MCF 10A (cell line): ENCODE measurements at regions of chr5 and their contacts with region 1.

Region 1: GRCh38 chr5:179749857-179750508 is 17.4 kb downstream of the MAML1 start:
- DNase-seq: no peak
- H3K4me3 Mint-ChIP-seq: no peak overlapping the region
- H3K27ac Mint-ChIP-seq: no peak overlapping the region
- H3K4me1 Mint-ChIP-seq: peaks cover 21% of the 10 kb centered on the region
- H3K27me3 Mint-ChIP-seq: no peaks in the 10 kb centered on the region
- CTCF ChIP-seq: no peak

Region 2: DNA sequence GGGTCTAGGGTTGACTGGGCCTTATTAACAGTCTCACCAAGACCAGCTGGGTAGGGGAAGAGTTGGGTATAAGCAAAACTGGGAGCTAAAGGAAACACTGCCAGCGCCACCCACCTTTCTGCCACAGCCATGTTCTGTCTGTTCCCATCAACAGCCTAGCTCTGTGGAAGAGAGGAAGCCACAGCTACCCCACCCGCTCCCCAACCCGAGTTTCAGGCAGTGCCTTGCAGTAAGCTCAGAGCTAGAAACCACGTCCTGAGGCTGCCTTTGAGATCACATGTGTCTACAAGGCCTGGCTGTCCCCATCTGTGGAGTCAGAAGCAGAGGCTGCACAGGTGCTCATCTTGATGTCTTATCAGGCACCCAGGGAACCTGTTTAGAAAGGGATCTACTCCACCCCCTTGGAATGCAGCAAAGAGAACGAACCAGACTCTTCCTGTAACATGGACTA is 141.8 kb before region 1 on chr5:
- CTCF ChIA-PET with region 1: no interaction called
- POLR2A ChIA-PET with region 1: no interaction called
- intact Hi-C with region 1: no loop called
- DNase-seq: no peak
- H3K4me3 Mint-ChIP-seq: no peak overlapping the region
- H3K27ac Mint-ChIP-seq: no peak overlapping the region
- H3K4me1 Mint-ChIP-seq: peaks cover 14% of the 10 kb centered on the region
- H3K27me3 Mint-ChIP-seq: no peaks in the 10 kb centered on the region
- CTCF ChIP-seq: no peak

Region 3: DNA sequence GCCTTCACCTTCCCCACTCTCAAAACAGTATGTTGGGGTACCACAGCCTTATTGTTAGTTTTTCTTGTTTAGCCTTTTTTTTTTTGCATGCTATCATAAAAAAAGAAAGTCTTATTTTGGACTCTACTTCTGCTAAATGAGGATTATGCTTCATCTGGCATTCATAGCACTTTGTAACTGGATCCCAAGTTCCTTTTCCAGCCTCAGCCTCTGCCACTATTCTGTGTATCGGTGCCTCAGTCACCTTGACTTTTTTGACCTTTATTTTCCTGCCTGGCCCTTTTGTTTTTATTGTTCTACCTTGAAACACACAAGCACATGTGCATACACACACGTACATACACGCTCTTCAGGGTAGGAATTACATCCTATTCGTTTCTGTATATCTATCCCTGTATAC is 25.8 kb before region 1 on chr5:
- CTCF ChIA-PET with region 1: no interaction called
- POLR2A ChIA-PET with region 1: no interaction called
- intact Hi-C with region 1: no loop called
- DNase-seq: no peak
- H3K4me3 Mint-ChIP-seq: no peak overlapping the region
- H3K27ac Mint-ChIP-seq: no peak overlapping the region
- H3K4me1 Mint-ChIP-seq: peaks cover 12% of the 10 kb centered on the region
- H3K27me3 Mint-ChIP-seq: no peaks in the 10 kb centered on the region
- CTCF ChIP-seq: no peak

Region 4: GRCh38 chr5:179738742-179739141 is 11.2 kb before region 1 on chr5:
- CTCF ChIA-PET with region 1: interaction called, 16 read pairs
- POLR2A ChIA-PET with region 1: interaction called, 4 read pairs
- intact Hi-C with region 1: no loop called
- DNase-seq: no peak
- H3K4me3 Mint-ChIP-seq: no peak overlapping the region
- H3K27ac Mint-ChIP-seq: peak overlapping the region; percentile 3
- H3K4me1 Mint-ChIP-seq: peaks cover 39% of the 10 kb centered on the region
- H3K27me3 Mint-ChIP-seq: no peaks in the 10 kb centered on the region
- CTCF ChIP-seq: no peak